ENCODE measurements at regions of chr1 and their contacts with region 1.

Region 1: GRCh38 chr1:110879758-110880606 is 7.0 kb downstream of the CD53 start:
- DNase-seq: peak; percentile 88
- H3K4me3 Mint-ChIP-seq: peak overlapping the region; percentile 58
- H3K27ac Mint-ChIP-seq: peak overlapping the region; percentile 99
- H3K4me1 Mint-ChIP-seq: peaks cover 69% of the 10 kb centered on the region
- H3K27me3 Mint-ChIP-seq: no peaks in the 10 kb centered on the region

Region 2: DNA sequence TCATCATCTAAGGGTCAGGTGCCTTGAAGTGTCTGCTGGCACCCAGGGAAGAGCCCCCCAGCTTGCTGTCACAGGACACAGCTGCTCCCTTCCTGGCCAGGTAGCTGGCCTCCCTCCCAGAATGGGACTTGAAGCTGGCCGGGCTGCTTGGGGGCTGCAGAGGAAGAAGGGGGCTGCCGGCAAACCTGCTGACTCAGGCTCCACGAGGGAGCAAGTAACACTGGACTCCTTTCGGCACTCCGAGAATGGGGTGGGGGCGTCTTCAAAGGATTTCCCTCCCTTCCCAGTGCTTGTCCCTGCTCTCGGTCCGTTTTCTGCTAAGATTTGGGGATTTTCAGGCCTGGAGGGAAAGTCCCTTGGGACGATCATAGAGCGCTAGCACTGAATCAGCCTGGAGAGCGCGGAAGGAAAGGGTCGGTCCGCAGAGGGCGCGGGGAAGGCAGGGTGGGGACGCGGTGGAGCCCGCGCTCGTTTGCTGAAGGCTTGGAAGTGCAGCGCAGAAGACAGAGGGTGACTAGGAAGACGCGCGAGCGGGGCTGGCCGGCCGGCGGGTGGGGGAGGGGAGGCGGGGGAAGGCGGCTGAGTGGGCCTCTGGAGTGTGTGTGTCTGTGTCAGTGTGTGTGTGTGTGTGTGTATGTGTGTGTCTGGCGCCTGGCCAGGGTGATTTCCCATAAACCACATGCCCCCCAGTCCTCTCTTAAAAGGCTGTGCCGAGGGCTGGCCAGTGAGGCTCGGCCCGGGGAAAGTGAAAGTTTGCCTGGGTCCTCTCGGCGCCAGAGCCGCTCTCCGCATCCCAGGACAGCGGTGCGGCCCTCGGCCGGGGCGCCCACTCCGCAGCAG is 969.6 kb before region 1 on chr1 and contains the start of gene CSF1:
- CTCF ChIA-PET with region 1: no interaction called
- intact Hi-C with region 1: loop called (anchors 2 kb)
- DNase-seq: peak; percentile 69
- H3K4me3 Mint-ChIP-seq: peak within 1 kb of the TSS; percentile 82
- H3K27ac Mint-ChIP-seq: peak within 1 kb of the TSS; percentile 81
- H3K4me1 Mint-ChIP-seq: peaks cover 53% of the 10 kb centered on the region
- H3K27me3 Mint-ChIP-seq: no peaks in the 10 kb centered on the region
- total RNA-seq, gene CSF1: 12.0 to 13.5 TPM

Region 3: GRCh38 chr1:110338886-110339406 is 541.0 kb before region 1 on chr1 and contains the start of gene RBM15:
- CTCF ChIA-PET with region 1: no interaction called
- intact Hi-C with region 1: loop called (anchors 5 kb)
- DNase-seq: peak; percentile 99
- H3K4me3 Mint-ChIP-seq: no peak within 1 kb of the TSS
- H3K27ac Mint-ChIP-seq: no peak within 1 kb of the TSS
- H3K4me1 Mint-ChIP-seq: peaks cover 48% of the 10 kb centered on the region
- H3K27me3 Mint-ChIP-seq: no peaks in the 10 kb centered on the region
- total RNA-seq, gene RBM15: 91.0 to 91.5 TPM

Region 4: GRCh38 chr1:110674337-110675059 is 205.5 kb before region 1 on chr1 and contains the start of gene KCNA3:
- CTCF ChIA-PET with region 1: interaction called, 6 read pairs
- intact Hi-C with region 1: loop called (anchors 1 kb)
- DNase-seq: peak; percentile 58
- H3K4me3 Mint-ChIP-seq: peak within 1 kb of the TSS; percentile 96
- H3K27ac Mint-ChIP-seq: peak within 1 kb of the TSS; percentile 92
- H3K4me1 Mint-ChIP-seq: peaks cover 24% of the 10 kb centered on the region
- H3K27me3 Mint-ChIP-seq: no peaks in the 10 kb centered on the region
- total RNA-seq, gene KCNA3: 15.3 to 15.4 TPM

Region 5: GRCh38 chr1:110850636-110851035 is 29.3 kb before region 1 on chr1:
- CTCF ChIA-PET with region 1: no interaction called
- intact Hi-C with region 1: no loop called
- DNase-seq: no peak
- H3K4me3 Mint-ChIP-seq: no peak overlapping the region
- H3K27ac Mint-ChIP-seq: no peak overlapping the region
- H3K4me1 Mint-ChIP-seq: peaks cover 7% of the 10 kb centered on the region
- H3K27me3 Mint-ChIP-seq: peaks cover 2% of the 10 kb centered on the region

Region 6: DNA sequence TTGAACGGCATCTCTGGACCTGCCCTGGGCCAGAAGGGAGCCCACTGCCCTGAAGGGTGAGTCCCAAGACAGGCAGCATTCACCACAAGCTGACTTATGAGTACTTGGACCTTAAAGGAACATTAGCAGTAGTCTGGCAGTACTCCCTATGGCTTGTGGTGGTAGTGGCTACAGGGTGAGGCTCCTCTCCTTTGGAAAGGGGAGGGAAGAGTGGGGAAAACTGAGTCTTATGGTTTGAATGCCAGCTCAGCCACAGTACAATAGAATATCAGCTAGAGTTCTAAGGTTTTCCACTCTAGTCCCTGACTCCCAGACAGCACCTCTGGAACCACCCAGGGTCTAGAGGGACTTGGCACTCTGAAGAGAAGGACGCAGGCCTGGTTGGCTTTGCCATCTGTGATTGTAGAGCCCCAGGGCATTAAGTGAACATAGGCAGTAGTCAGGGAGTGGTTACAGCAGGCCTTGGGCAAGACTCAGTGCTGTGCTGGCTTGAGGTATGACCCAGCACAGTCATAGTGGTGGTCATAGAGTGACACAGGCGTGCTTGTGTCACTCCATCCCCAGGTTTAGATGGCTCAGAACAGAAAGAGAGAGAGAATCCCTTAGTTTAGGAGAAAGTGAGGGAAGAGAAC is 24.0 kb after region 1 on chr1:
- CTCF ChIA-PET with region 1: no interaction called
- intact Hi-C with region 1: no loop called
- DNase-seq: no peak
- H3K4me3 Mint-ChIP-seq: no peak overlapping the region
- H3K27ac Mint-ChIP-seq: peak overlapping the region; percentile 70
- H3K4me1 Mint-ChIP-seq: peaks cover 15% of the 10 kb centered on the region
- H3K27me3 Mint-ChIP-seq: no peaks in the 10 kb centered on the region

Region 7: DNA sequence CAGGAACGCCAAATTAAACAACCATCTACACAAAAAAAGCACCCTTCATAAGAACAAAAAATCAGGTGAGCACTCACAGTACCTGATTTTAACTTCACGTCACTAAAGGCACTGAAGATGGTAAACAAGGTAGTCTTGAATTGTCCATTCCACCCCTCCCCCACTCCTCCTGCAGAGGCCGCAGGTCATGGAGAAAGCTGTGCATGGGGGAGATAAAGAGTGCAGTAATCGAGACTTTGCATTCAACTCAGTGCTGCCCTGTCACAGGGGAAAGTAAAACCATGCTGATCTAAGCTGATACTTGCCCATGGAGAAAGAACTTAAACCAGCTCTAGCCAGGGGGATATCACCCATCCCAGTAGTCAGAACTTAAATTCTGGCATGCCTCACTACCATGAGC is 145.1 kb after region 1 on chr1:
- CTCF ChIA-PET with region 1: no interaction called
- intact Hi-C with region 1: no loop called
- DNase-seq: no peak
- H3K4me3 Mint-ChIP-seq: no peak overlapping the region
- H3K27ac Mint-ChIP-seq: no peak overlapping the region
- H3K4me1 Mint-ChIP-seq: no peaks in the 10 kb centered on the region
- H3K27me3 Mint-ChIP-seq: peaks cover 2% of the 10 kb centered on the region

Region 8: GRCh38 chr1:111148376-111148881 is 268.4 kb after region 1 on chr1:
- CTCF ChIA-PET with region 1: no interaction called
- intact Hi-C with region 1: loop called (anchors 5 kb)
- DNase-seq: no peak
- H3K4me3 Mint-ChIP-seq: no peak overlapping the region
- H3K27ac Mint-ChIP-seq: no peak overlapping the region
- H3K4me1 Mint-ChIP-seq: peaks cover 78% of the 10 kb centered on the region
- H3K27me3 Mint-ChIP-seq: no peaks in the 10 kb centered on the region

Region 9: GRCh38 chr1:111275079-111275478 is 395.1 kb after region 1 on chr1:
- CTCF ChIA-PET with region 1: no interaction called
- intact Hi-C with region 1: loop called (anchors 1 kb)
- DNase-seq: peak; percentile 46
- H3K4me3 Mint-ChIP-seq: no peak overlapping the region
- H3K27ac Mint-ChIP-seq: peak overlapping the region; percentile 32
- H3K4me1 Mint-ChIP-seq: peaks cover 47% of the 10 kb centered on the region
- H3K27me3 Mint-ChIP-seq: peaks cover 22% of the 10 kb centered on the region

Region 10: DNA sequence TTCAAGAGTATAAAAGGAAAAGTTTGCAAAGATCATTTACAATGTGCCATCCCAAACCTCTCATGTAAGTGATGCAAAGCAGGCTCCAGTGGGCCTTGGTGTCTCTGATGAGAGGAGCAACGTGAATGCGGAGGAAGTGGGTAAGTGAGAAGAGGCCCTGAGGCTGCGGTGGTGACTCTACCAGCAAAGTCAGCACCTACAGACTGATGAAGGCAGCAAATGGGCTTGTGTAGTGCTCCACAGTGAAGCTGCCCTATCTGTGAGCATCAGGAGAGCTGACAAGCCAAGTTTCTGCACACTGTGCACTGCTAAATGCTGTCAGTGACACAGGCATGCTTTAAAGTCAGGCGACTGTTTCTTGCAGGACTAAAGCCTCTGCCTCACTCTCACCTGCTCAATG is 724.0 kb after region 1 on chr1:
- CTCF ChIA-PET with region 1: no interaction called
- intact Hi-C with region 1: loop called (anchors 5 kb)
- DNase-seq: peak; percentile 90
- H3K4me3 Mint-ChIP-seq: peak overlapping the region; percentile 7
- H3K27ac Mint-ChIP-seq: peak overlapping the region; percentile 92
- H3K4me1 Mint-ChIP-seq: peaks cover 76% of the 10 kb centered on the region
- H3K27me3 Mint-ChIP-seq: no peaks in the 10 kb centered on the region

Measured in activated naive CD4-positive, alpha-beta T cell treated with anti-CD3 and anti-CD28 coated beads for 36 hours (primary cell).